WTC11 (cell line): ENCODE measurements at regions of chr16 and their contacts with region 1.

Region 1: GRCh38 chr16:648781-649589 is at the start of gene WDR90:
- DNase-seq: peak; percentile 94
- ATAC-seq: peak; percentile 67
- H3K4me3 Mint-ChIP-seq: peak within 1 kb of the TSS; percentile 73
- H3K27ac Mint-ChIP-seq: no peak within 1 kb of the TSS; the same call in 1 of the 2 replicates
- H3K4me1 Mint-ChIP-seq: peaks cover 9% of the 10 kb centered on the region; the same call in 1 of the 2 replicates
- H3K27me3 Mint-ChIP-seq: no peaks in the 10 kb centered on the region
- CTCF ChIP-seq: no peak
- total RNA-seq, gene WDR90: 66.2 to 75.8 TPM (median 69.6 TPM) in 3 replicates

Region 2: GRCh38 chr16:600781-601180 is 48.2 kb before region 1 on chr16:
- CTCF ChIA-PET with region 1: interaction called, 13 read pairs
- POLR2A ChIA-PET with region 1: no interaction called
- DNase-seq: no peak
- ATAC-seq: peak; percentile 89
- H3K4me3 Mint-ChIP-seq: no peak overlapping the region
- H3K27ac Mint-ChIP-seq: peak overlapping the region; percentile 22; the same call in 1 of the 2 replicates
- H3K4me1 Mint-ChIP-seq: no peaks in the 10 kb centered on the region
- H3K27me3 Mint-ChIP-seq: no peaks in the 10 kb centered on the region
- CTCF ChIP-seq: no peak

Region 3: DNA sequence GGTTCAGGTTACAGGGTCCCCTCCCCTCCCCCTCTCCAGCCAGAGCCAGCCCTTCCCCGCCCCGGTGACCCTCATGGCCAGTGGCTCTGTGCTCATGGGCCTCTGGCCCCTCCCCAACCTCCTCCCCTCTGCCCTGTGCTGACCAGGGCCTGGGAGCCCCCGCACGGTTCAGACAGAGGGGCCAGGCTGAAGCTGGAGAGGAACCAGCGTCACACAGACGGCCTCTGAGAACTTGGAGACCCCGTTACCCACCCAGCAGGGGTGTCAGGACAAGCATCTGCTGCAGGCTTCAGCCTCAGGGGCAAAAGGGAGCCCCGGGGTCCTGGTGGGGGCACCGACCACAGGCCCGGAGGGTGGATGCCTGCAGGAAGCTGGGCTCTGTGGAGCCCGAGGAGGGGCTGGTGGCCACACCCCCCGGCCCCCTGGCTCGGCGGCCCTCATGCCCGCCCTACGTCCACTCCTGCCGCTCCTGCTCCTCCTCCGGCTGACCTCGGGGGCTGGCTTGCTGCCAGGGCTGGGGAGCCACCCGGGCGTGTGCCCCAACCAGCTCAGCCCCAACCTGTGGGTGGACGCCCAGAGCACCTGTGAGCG is 18.1 kb before region 1 on chr16 and contains the start of gene WFIKKN1:
- CTCF ChIA-PET with region 1: interaction called, 37 read pairs
- POLR2A ChIA-PET with region 1: interaction called, 7 read pairs
- DNase-seq: peak; percentile 85
- ATAC-seq: peak; percentile 83
- H3K4me3 Mint-ChIP-seq: peak within 1 kb of the TSS; percentile 59
- H3K27ac Mint-ChIP-seq: peak within 1 kb of the TSS; percentile 41
- H3K4me1 Mint-ChIP-seq: peaks cover 18% of the 10 kb centered on the region
- H3K27me3 Mint-ChIP-seq: no peaks in the 10 kb centered on the region
- CTCF ChIP-seq: no peak
- total RNA-seq, gene WFIKKN1: 12.3 to 18.6 TPM (median 17.3 TPM) in 3 replicates

Region 4: GRCh38 chr16:660459-661183 is 11.6 kb after region 1 on chr16:
- CTCF ChIA-PET with region 1: interaction called, 54 read pairs
- POLR2A ChIA-PET with region 1: interaction called, 3 read pairs
- DNase-seq: peak; percentile 93
- ATAC-seq: peak; percentile 95
- H3K4me3 Mint-ChIP-seq: no peak overlapping the region; the same call in 1 of the 2 replicates
- H3K27ac Mint-ChIP-seq: no peak overlapping the region
- H3K4me1 Mint-ChIP-seq: peaks cover 4% of the 10 kb centered on the region
- H3K27me3 Mint-ChIP-seq: no peaks in the 10 kb centered on the region
- CTCF ChIP-seq: peak; percentile 58

Region 5: GRCh38 chr16:679814-680622 is 31.0 kb after region 1 on chr16 and contains the start of gene STUB1:
- CTCF ChIA-PET with region 1: interaction called, 16 read pairs
- POLR2A ChIA-PET with region 1: interaction called, 4 read pairs
- DNase-seq: peak; percentile 97
- ATAC-seq: peak; percentile 41
- H3K4me3 Mint-ChIP-seq: peak within 1 kb of the TSS; percentile 76
- H3K27ac Mint-ChIP-seq: peak within 1 kb of the TSS; percentile 85
- H3K4me1 Mint-ChIP-seq: peaks cover 27% of the 10 kb centered on the region
- H3K27me3 Mint-ChIP-seq: no peaks in the 10 kb centered on the region
- CTCF ChIP-seq: no peak
- total RNA-seq, gene STUB1: 79.0 to 88.2 TPM (median 85.8 TPM) in 3 replicates